Transverse colon (tissue), 4 donors: ENCODE measurements at regions of chr3 and their contacts with region 1.

Region 1: GRCh38 chr3:73681218-73682009 is 56.7 kb upstream of the PDZRN3 start:
- DNase-seq: no peak
- H3K4me3 ChIP-seq: no peak overlapping the region
- H3K27ac ChIP-seq: no peak overlapping the region
- H3K4me1 ChIP-seq: no peaks in the 10 kb centered on the region
- H3K27me3 ChIP-seq: no peaks in the 10 kb centered on the region
- CTCF ChIP-seq: no peak
- EP300 ChIP-seq: no peak
- POLR2A ChIP-seq: no peak

Region 2: GRCh38 chr3:73351423-73352071 is 329.9 kb before region 1 on chr3:
- in situ Hi-C with region 1: no loop called
- intact Hi-C with region 1: no loop called
- DNase-seq: no peak
- H3K4me3 ChIP-seq: no peak overlapping the region
- H3K27ac ChIP-seq: peak overlapping the region in 1 of 4 donors; percentile 28
- H3K4me1 ChIP-seq: peaks cover 0 to 7% (median 0%) of the 10 kb centered on the region in 4 donors
- H3K27me3 ChIP-seq: no peaks in the 10 kb centered on the region
- CTCF ChIP-seq: no peak
- EP300 ChIP-seq: no peak
- POLR2A ChIP-seq: no peak

Region 3: DNA sequence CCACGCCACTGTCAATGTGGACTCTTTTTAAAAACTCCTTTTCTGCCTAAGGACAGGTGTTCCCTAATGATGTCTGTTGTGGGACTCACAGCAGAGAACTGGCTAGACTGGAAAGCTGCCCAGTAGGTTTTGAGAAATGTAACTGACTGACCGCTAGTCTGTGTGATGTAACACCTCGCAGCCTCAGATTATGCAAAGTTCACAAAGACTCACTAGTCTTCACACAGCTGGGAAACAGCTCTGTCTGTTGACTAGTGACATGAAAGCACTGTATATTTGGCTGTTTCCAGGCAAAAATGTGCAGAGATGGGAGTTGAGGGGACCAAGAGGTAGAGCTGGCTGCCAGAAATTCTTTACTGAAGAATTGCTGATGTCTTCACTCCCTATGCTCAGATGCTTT is 67.0 kb before region 1 on chr3:
- in situ Hi-C with region 1: no loop called
- intact Hi-C with region 1: no loop called
- DNase-seq: peak; percentile 20
- H3K4me3 ChIP-seq: no peak overlapping the region
- H3K27ac ChIP-seq: peak overlapping the region; percentile 49 to 93 (median 57)
- H3K4me1 ChIP-seq: peaks cover 0 to 49% (median 12%) of the 10 kb centered on the region in 4 donors
- H3K27me3 ChIP-seq: no peaks in the 10 kb centered on the region
- CTCF ChIP-seq: peak in 1 of 5 experiments; percentile 10
- EP300 ChIP-seq: no peak
- POLR2A ChIP-seq: no peak

Region 4: GRCh38 chr3:73656241-73656890 is 25.0 kb before region 1 on chr3:
- in situ Hi-C with region 1: no loop called
- intact Hi-C with region 1: loop called (anchors 1 kb)
- DNase-seq: no peak
- H3K4me3 ChIP-seq: no peak overlapping the region
- H3K27ac ChIP-seq: no peak overlapping the region
- H3K4me1 ChIP-seq: no peaks in the 10 kb centered on the region
- H3K27me3 ChIP-seq: no peaks in the 10 kb centered on the region
- CTCF ChIP-seq: no peak
- EP300 ChIP-seq: no peak
- POLR2A ChIP-seq: no peak

Region 5: GRCh38 chr3:73805435-73805834 is 124.0 kb after region 1 on chr3:
- in situ Hi-C with region 1: no loop called
- intact Hi-C with region 1: no loop called
- DNase-seq: peak; percentile 13
- H3K4me3 ChIP-seq: no peak overlapping the region
- H3K27ac ChIP-seq: peak overlapping the region in 2 of 4 donors; percentile 42 to 46
- H3K4me1 ChIP-seq: no peaks in the 10 kb centered on the region
- H3K27me3 ChIP-seq: no peaks in the 10 kb centered on the region
- CTCF ChIP-seq: no peak
- EP300 ChIP-seq: no peak
- POLR2A ChIP-seq: no peak

Region 6: DNA sequence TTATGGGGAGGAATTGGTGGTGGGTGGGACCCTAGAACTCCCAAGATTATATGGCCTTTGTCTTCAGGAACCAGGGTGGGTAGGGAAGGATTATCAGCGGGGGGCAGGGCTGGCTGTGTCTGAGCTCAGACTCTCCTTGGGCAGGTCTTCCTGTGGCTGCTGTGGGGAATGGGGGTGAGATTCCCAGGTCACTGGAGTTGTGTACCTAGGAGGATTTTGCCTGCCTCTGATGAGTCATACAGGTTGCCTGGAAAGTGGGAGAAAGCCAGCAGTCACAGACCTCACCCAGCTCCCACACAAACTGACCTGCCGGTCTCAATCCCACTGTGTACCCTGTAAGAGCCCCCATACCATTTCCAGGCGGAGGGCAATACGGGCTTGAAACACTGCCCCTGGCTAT is 1143.0 kb after region 1 on chr3:
- in situ Hi-C with region 1: no loop called
- intact Hi-C with region 1: no loop called
- DNase-seq: no peak
- H3K4me3 ChIP-seq: no peak overlapping the region
- H3K27ac ChIP-seq: no peak overlapping the region
- H3K4me1 ChIP-seq: no peaks in the 10 kb centered on the region
- H3K27me3 ChIP-seq: no peaks in the 10 kb centered on the region
- CTCF ChIP-seq: no peak
- EP300 ChIP-seq: no peak
- POLR2A ChIP-seq: no peak